GM13977 (cell line): ENCODE measurements at regions of chr9 and their contacts with region 1.

Region 1: DNA sequence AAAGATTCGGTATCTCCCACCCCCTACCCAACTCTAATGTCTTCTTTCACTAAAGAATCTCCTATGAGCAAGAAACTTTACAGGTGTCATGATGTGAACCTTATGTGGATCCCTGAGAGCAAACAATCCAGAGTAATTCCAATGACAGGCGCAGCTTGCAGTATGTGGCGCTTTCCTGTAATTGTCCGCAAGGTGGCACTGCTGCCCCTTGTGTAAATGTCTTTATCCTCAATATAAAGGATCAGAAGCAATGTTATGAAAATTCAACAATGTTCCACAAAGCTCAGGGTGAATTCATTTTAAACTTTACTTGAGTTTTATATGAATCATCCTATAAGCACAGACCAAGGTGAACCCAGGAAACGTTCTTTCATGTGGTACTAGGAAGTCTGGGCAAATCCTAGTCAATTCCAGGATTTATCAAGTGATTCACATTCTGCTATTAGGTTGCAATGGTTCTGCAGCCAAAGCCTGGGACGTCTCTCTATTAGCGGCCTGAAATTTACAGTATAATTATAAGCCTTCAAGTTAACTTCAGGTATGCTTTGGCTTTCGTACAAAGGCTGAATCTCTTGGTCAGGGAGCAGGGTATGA is 113.7 kb downstream of the TRPM6 start:
- DNase-seq: peak; percentile 59
- CTCF ChIP-seq: peak; percentile 91

Region 2: GRCh38 chr9:75001719-75002422 is 227.9 kb after region 1 on chr9:
- in situ Hi-C with region 1: loop called (anchors 5 kb)
- DNase-seq: peak; percentile 38
- CTCF ChIP-seq: peak; percentile 68

Region 3: DNA sequence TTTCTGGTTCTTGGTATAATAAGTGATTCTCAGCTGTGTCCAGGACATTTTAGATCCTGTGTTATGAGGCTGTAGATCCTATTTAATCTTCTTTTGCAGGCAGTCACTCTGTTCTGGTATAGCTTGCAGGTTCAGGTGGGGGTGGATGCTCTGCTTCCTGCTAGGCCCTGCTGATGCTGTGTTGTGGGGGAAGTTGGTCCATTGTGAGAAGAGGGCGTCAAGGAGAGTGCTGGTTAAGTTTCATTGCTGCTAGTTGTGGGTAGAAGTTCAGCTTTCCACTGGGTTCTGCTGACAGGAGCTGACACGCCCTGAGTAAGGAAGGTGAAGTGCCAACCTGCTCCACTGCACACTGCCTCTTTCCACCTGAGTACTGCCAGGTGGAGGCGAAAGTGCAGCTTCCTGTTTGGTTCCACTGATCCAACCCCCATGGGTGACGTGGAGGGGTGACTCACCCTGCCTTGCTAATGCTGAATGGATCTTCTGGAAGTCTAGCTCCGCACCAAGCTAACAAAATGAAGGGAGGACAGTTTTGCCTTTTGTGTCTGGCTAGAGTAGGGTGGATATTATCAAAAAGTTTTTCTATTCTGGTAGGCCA is 297.6 kb after region 1 on chr9:
- in situ Hi-C with region 1: loop called (anchors 5 kb)
- DNase-seq: no peak
- CTCF ChIP-seq: no peak